WTC11 (cell line): ENCODE measurements at regions of chr17 and their contacts with region 1.

Region 1: GRCh38 chr17:2874189-2874686 is 78.0 kb downstream of the RAP1GAP2 start:
- DNase-seq: peak; percentile 61
- ATAC-seq: peak; percentile 73
- H3K4me3 Mint-ChIP-seq: peak overlapping the region; percentile 59
- H3K27ac Mint-ChIP-seq: peak overlapping the region; percentile 100
- H3K4me1 Mint-ChIP-seq: peaks cover 85% of the 10 kb centered on the region
- H3K27me3 Mint-ChIP-seq: no peaks in the 10 kb centered on the region
- CTCF ChIP-seq: no peak

Region 2: GRCh38 chr17:2814481-2815341 is 59.5 kb before region 1 on chr17:
- CTCF ChIA-PET with region 1: no interaction called
- POLR2A ChIA-PET with region 1: no interaction called
- DNase-seq: no peak
- ATAC-seq: peak; percentile 24
- H3K4me3 Mint-ChIP-seq: no peak overlapping the region
- H3K27ac Mint-ChIP-seq: no peak overlapping the region
- H3K4me1 Mint-ChIP-seq: peaks cover 7% of the 10 kb centered on the region
- H3K27me3 Mint-ChIP-seq: no peaks in the 10 kb centered on the region
- CTCF ChIP-seq: no peak

Region 3: GRCh38 chr17:2853111-2853721 is 21.0 kb before region 1 on chr17:
- CTCF ChIA-PET with region 1: interaction called, 53 read pairs
- POLR2A ChIA-PET with region 1: interaction called, 28 read pairs
- DNase-seq: peak; percentile 71
- ATAC-seq: peak; percentile 3
- H3K4me3 Mint-ChIP-seq: peak overlapping the region; percentile 51
- H3K27ac Mint-ChIP-seq: no peak overlapping the region
- H3K4me1 Mint-ChIP-seq: peaks cover 46% of the 10 kb centered on the region
- H3K27me3 Mint-ChIP-seq: no peaks in the 10 kb centered on the region
- CTCF ChIP-seq: no peak

Region 4: GRCh38 chr17:2904152-2904551 is 29.9 kb after region 1 on chr17:
- CTCF ChIA-PET with region 1: interaction called, 10 read pairs
- POLR2A ChIA-PET with region 1: interaction called, 6 read pairs
- DNase-seq: no peak
- ATAC-seq: peak; percentile 13
- H3K4me3 Mint-ChIP-seq: no peak overlapping the region
- H3K27ac Mint-ChIP-seq: peak overlapping the region; percentile 71; the same call in 1 of the 2 replicates
- H3K4me1 Mint-ChIP-seq: peaks cover 24% of the 10 kb centered on the region
- H3K27me3 Mint-ChIP-seq: no peaks in the 10 kb centered on the region
- CTCF ChIP-seq: no peak